CD8-positive, alpha-beta memory T cell (primary cell): ENCODE measurements at regions of chr6 and their contacts with region 1.

Region 1: GRCh38 chr6:90425161-90425641 is 128.6 kb upstream of the BACH2 start:
- DNase-seq: peak in 2 of 5 donors; percentile 25 to 49
- H3K4me3 ChIP-seq: peak overlapping the region; percentile 33
- H3K4me3 Mint-ChIP-seq: peak overlapping the region; percentile 51 to 82 (median 79)
- H3K27ac ChIP-seq: peak overlapping the region; percentile 34
- H3K27ac Mint-ChIP-seq: peak overlapping the region; percentile 68 to 98 (median 93)
- H3K4me1 ChIP-seq: peaks cover 10% of the 10 kb centered on the region
- H3K4me1 Mint-ChIP-seq: peaks cover 16 to 24% (median 22%) of the 10 kb centered on the region in 3 donors
- H3K27me3 ChIP-seq: no peaks in the 10 kb centered on the region
- H3K27me3 Mint-ChIP-seq: peaks cover 0 to 7% of the 10 kb centered on the region in 2 donors

Region 2: GRCh38 chr6:89402776-89403175 is 1022.4 kb before region 1 on chr6:
- CTCF ChIA-PET with region 1: no interaction called
- POLR2A ChIA-PET with region 1: interaction called, 11 read pairs
- DNase-seq: no peak
- H3K4me3 ChIP-seq: no peak overlapping the region
- H3K4me3 Mint-ChIP-seq: no peak overlapping the region
- H3K27ac ChIP-seq: no peak overlapping the region
- H3K27ac Mint-ChIP-seq: peak overlapping the region in 1 of 8 donors; percentile 3
- H3K4me1 ChIP-seq: no peaks in the 10 kb centered on the region
- H3K4me1 Mint-ChIP-seq: peaks cover 0 to 6% (median 0%) of the 10 kb centered on the region in 3 donors
- H3K27me3 ChIP-seq: no peaks in the 10 kb centered on the region
- H3K27me3 Mint-ChIP-seq: peaks cover 2 to 4% of the 10 kb centered on the region in 2 donors

Region 3: GRCh38 chr6:90319044-90319443 is 106.2 kb before region 1 on chr6:
- CTCF ChIA-PET with region 1: no interaction called
- POLR2A ChIA-PET with region 1: no interaction called
- DNase-seq: no peak
- H3K4me3 ChIP-seq: no peak overlapping the region
- H3K4me3 Mint-ChIP-seq: no peak overlapping the region
- H3K27ac ChIP-seq: no peak overlapping the region
- H3K27ac Mint-ChIP-seq: peak overlapping the region in 1 of 8 donors; percentile 1
- H3K4me1 ChIP-seq: no peaks in the 10 kb centered on the region
- H3K4me1 Mint-ChIP-seq: peaks cover 0 to 8% (median 4%) of the 10 kb centered on the region in 3 donors
- H3K27me3 ChIP-seq: no peaks in the 10 kb centered on the region
- H3K27me3 Mint-ChIP-seq: peaks cover 4% of the 10 kb centered on the region in 2 donors

Region 4: DNA sequence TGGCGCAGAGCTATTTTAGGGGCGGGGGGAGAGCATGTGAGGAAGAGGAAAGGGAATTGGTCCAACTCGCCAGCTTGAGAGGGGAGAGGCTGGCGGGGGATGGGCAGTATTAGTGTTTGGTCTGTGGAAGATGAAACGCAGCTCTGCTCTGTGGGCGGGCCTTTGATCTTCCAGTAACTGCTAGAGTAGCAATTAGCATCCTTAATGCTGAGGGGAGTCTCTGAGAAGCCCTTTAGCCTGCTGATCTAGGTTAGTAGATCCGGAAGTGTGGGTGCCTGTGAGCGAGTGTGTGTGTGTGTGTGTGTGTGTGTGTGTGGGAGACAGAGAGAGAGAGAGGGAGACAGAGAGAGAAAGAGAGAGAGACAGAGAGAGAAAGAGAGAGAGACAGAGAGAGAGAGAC is 11.3 kb before region 1 on chr6:
- CTCF ChIA-PET with region 1: interaction called, 31 read pairs
- POLR2A ChIA-PET with region 1: interaction called, 5 read pairs
- DNase-seq: peak; percentile 50 to 91 (median 76)
- H3K4me3 ChIP-seq: peak overlapping the region; percentile 10
- H3K4me3 Mint-ChIP-seq: peak overlapping the region; percentile 68 to 92 (median 84)
- H3K27ac ChIP-seq: no peak overlapping the region
- H3K27ac Mint-ChIP-seq: peak overlapping the region; percentile 86 to 99 (median 95)
- H3K4me1 ChIP-seq: peaks cover 33% of the 10 kb centered on the region
- H3K4me1 Mint-ChIP-seq: peaks cover 37 to 50% (median 48%) of the 10 kb centered on the region in 3 donors
- H3K27me3 ChIP-seq: no peaks in the 10 kb centered on the region
- H3K27me3 Mint-ChIP-seq: peaks cover 0 to 6% of the 10 kb centered on the region in 2 donors

Region 5: DNA sequence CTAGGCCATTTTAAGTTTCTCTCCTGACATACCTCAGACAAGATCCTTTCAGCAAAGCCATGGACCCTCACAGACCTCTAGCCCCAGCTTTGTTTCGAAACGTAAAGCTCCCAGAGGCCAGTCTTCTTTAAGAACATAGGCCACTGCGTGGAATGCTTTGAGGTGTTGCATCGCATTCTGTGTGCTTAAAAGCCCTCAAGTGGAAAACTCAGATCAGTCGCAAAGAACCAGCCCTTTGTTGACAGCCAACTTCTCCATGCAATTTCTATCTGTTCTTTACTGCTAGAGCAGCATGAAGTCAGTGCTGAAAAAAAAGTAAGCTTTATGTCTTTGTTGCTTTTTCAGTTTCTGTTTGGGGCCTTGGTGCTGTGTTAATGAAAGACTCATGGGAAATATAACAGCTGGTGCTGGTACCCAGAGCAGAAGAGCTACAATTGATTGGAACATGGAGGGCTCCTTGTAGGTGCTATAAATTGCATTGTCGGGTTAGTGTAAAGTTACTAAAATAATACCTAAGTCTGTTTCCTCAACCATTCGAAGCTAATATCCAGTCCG is 19.0 kb after region 1 on chr6:
- CTCF ChIA-PET with region 1: no interaction called
- POLR2A ChIA-PET with region 1: no interaction called
- DNase-seq: no peak
- H3K4me3 ChIP-seq: no peak overlapping the region
- H3K4me3 Mint-ChIP-seq: no peak overlapping the region
- H3K27ac ChIP-seq: no peak overlapping the region
- H3K27ac Mint-ChIP-seq: no peak overlapping the region
- H3K4me1 ChIP-seq: no peaks in the 10 kb centered on the region
- H3K4me1 Mint-ChIP-seq: peaks cover 4 to 11% (median 4%) of the 10 kb centered on the region in 3 donors
- H3K27me3 ChIP-seq: no peaks in the 10 kb centered on the region
- H3K27me3 Mint-ChIP-seq: peaks cover 1 to 4% of the 10 kb centered on the region in 2 donors